Calu3 (cell line): ENCODE measurements at regions of chr10 and their contacts with region 1.

Region 1: GRCh38 chr10:68208424-68209042 is 23.4 kb downstream of the ATOH7 start:
- DNase-seq: peak; percentile 83
- H3K4me3 Mint-ChIP-seq: no peak overlapping the region
- H3K27ac Mint-ChIP-seq: no peak overlapping the region
- H3K4me1 Mint-ChIP-seq: no peaks in the 10 kb centered on the region
- H3K27me3 Mint-ChIP-seq: peaks cover 19% of the 10 kb centered on the region
- CTCF ChIP-seq: peak; percentile 73

Region 2: GRCh38 chr10:67697724-67698131 is 510.8 kb before region 1 on chr10:
- CTCF ChIA-PET with region 1: no interaction called
- intact Hi-C with region 1: loop called (anchors 10 kb)
- DNase-seq: peak; percentile 44
- H3K4me3 Mint-ChIP-seq: no peak overlapping the region
- H3K27ac Mint-ChIP-seq: no peak overlapping the region
- H3K4me1 Mint-ChIP-seq: no peaks in the 10 kb centered on the region
- H3K27me3 Mint-ChIP-seq: peaks cover 63% of the 10 kb centered on the region
- CTCF ChIP-seq: peak; percentile 57

Region 3: DNA sequence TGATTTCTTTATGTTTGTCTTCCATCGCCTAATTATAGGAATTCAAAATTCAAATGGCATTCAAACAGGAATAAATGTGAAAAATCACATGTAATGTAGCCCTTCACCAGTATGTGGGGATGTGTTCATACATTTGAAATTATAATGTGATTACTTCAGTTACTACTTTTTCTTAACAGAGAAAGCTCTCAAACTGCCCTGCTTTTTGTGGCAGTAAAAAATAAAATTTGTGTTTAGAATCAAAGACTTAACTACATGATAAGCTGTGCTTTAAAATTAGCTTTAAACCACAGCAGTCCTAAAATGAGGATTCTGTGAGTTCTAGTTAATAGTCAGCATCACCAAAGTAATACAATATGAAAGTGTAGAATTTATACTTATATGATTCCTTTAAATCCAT is 125.7 kb before region 1 on chr10:
- CTCF ChIA-PET with region 1: interaction called, 5 read pairs
- intact Hi-C with region 1: loop called (anchors 1 kb)
- DNase-seq: no peak
- H3K4me3 Mint-ChIP-seq: no peak overlapping the region
- H3K27ac Mint-ChIP-seq: peak overlapping the region; percentile 36
- H3K4me1 Mint-ChIP-seq: peaks cover 29% of the 10 kb centered on the region
- H3K27me3 Mint-ChIP-seq: no peaks in the 10 kb centered on the region
- CTCF ChIP-seq: peak; percentile 23

Region 4: DNA sequence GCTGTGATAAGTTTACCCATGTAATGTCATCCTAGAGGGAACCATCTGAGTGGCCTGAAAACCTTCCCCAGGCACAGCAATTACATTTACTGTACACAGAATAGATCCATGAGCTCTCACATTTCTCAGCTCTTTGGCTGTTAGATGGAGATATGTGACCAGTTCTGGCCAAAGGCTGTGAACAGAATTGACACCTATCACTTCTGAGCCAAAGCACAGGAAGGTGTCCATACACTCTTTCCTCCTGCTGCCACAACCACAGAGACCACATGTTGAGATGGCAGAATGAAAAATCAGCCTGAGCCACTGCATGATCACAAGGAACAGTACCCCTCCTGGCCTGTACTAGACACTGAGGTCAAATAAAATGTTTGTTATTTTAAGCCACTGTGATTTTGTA is 67.7 kb after region 1 on chr10:
- CTCF ChIA-PET with region 1: no interaction called
- intact Hi-C with region 1: no loop called
- DNase-seq: no peak
- H3K4me3 Mint-ChIP-seq: no peak overlapping the region
- H3K27ac Mint-ChIP-seq: no peak overlapping the region
- H3K4me1 Mint-ChIP-seq: peaks cover 5% of the 10 kb centered on the region
- H3K27me3 Mint-ChIP-seq: no peaks in the 10 kb centered on the region
- CTCF ChIP-seq: no peak

Region 5: DNA sequence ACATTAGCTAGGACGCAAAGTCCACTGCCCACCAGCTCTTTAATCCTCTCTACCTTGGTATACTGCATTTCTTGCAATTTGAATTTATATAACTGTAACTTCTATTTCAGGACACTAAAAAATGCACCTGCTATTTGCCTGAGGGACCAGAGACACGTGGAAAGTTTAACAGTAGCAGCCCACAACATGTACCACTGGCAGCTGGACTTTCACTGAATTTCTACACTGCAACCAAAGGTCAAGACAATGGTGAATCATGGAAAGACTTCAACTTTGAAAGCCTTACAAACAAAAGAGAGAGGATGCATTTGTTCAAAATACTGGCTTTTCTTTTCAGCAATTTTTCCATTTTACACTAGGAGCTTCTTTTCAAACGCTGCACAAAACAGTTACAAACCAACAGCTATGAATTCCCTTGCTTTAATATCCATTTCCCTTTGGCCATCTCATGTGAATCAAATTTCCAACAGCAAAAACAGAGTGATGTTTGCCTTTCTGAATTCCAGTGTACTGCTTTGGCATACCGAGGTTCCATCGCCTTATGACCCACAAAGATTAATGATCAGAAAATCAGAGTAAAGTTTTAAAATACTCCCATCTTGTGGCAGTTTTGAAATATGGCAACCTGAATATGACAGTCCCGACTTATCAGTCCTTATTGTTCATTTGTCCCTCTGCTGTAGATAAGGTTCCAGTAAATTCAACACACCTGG is 93.4 kb after region 1 on chr10:
- CTCF ChIA-PET with region 1: interaction called, 51 read pairs
- intact Hi-C with region 1: loop called (anchors 1 kb)
- DNase-seq: peak; percentile 16
- H3K4me3 Mint-ChIP-seq: no peak overlapping the region
- H3K27ac Mint-ChIP-seq: no peak overlapping the region
- H3K4me1 Mint-ChIP-seq: peaks cover 31% of the 10 kb centered on the region
- H3K27me3 Mint-ChIP-seq: no peaks in the 10 kb centered on the region
- CTCF ChIP-seq: peak; percentile 24

Region 6: DNA sequence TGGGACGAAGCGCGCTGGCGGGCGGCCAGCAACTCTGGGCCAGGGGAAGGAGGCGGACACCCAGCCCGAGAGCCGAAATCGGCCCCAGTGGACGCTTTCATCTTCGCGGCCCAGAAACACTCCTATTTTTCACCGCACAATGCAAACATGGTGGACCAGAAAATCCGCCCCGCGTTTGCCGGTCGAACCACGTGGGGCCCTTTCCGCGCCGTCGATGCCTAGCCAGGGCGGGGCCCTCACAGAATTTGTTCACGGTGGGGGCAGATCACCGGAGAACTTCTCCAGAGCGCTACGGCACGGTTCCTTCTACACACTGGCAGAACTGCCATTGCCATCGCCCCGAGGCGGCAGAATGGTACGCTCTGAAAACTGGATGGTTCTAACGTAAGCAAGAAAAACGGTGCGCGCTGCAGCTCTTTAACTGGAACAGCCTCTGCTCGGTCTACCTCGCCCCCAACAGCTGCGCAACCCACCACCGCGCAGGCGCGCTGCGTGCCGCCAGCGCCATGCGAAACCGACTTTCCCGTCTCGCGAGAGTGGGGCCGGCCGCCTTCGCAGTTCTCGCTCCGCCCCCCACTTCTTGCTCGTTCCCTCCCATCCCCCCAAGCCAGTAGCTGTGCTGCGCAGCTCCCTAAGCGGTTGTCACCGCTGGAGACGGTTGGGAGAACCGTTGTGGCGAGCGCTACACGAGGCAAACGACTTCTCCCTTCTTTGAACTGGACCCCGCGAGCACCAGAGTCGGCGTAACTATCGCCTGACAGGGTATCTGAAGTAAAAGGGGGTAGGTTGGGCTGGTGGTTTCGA is 123.1 kb after region 1 on chr10 and contains the start of gene HNRNPH3:
- CTCF ChIA-PET with region 1: interaction called, 18 read pairs
- intact Hi-C with region 1: no loop called
- DNase-seq: peak; percentile 99
- H3K4me3 Mint-ChIP-seq: peak within 1 kb of the TSS; percentile 98
- H3K27ac Mint-ChIP-seq: peak within 1 kb of the TSS; percentile 88
- H3K4me1 Mint-ChIP-seq: peaks cover 56% of the 10 kb centered on the region
- H3K27me3 Mint-ChIP-seq: no peaks in the 10 kb centered on the region
- CTCF ChIP-seq: no peak
- total RNA-seq, gene HNRNPH3: 170 and 184 TPM in 2 replicates

Region 7: DNA sequence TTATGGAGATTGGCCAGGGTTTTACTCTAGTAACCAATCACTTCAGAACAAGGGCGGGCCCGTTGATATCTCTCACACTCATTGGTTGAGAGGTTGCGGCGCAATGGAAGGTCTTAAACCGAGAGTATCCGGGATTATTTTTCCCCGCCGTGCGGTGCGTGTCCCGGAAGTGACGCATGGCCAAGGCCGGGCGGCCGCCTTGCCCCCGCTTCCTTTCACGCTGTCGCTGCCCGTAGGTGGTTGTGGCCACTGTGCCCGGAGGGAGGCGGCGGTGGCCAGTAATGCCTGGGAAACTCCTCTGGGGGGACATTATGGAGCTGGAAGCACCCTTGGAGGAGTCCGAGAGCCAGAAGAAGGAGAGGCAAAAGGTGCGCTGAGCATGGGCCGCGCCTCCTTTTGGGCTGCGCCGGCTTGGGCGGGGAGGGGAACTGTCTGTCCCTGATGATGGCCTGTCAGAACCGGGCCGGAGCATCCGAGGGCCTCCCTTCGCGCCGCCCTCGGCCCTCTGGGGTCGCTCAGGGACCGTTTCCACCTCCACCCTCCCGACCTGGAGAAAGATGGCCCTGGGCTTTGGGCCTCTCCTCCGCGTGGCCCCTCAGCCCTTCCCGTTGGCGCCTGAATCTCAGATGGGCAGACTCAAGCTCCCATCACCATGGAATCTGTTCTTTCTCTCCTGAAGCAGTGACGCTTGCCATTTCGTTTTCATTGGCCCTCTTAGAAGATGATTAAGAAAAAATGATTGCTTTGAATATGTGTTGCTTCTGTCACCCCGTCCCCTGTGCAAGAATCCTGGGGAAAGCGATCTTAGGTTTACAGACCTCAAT is 692.8 kb after region 1 on chr10 and contains the start of gene DDX50:
- CTCF ChIA-PET with region 1: no interaction called
- intact Hi-C with region 1: loop called (anchors 10 kb)
- DNase-seq: peak; percentile 98
- H3K4me3 Mint-ChIP-seq: peak within 1 kb of the TSS; percentile 94
- H3K27ac Mint-ChIP-seq: peak within 1 kb of the TSS; percentile 90
- H3K4me1 Mint-ChIP-seq: peaks cover 28% of the 10 kb centered on the region
- H3K27me3 Mint-ChIP-seq: no peaks in the 10 kb centered on the region
- CTCF ChIP-seq: no peak
- total RNA-seq, gene DDX50: 39.1 and 44.4 TPM in 2 replicates